ENCODE measurements at regions of chr18 and their contacts with region 1.

Region 1: GRCh38 chr18:77000527-77000926 is 132.1 kb downstream of the MBP start:
- DNase-seq: no peak
- H3K4me3 ChIP-seq: peak overlapping the region in 3 of 4 donors; percentile 9 to 38 (median 29)
- H3K27ac ChIP-seq: no peak overlapping the region
- H3K4me1 ChIP-seq: peaks cover 0 to 8% (median 6%) of the 10 kb centered on the region in 4 donors
- H3K27me3 ChIP-seq: no peaks in the 10 kb centered on the region
- CTCF ChIP-seq: peak; percentile 94 to 97 (median 95)
- EP300 ChIP-seq: no peak
- POLR2A ChIP-seq: no peak

Region 2: DNA sequence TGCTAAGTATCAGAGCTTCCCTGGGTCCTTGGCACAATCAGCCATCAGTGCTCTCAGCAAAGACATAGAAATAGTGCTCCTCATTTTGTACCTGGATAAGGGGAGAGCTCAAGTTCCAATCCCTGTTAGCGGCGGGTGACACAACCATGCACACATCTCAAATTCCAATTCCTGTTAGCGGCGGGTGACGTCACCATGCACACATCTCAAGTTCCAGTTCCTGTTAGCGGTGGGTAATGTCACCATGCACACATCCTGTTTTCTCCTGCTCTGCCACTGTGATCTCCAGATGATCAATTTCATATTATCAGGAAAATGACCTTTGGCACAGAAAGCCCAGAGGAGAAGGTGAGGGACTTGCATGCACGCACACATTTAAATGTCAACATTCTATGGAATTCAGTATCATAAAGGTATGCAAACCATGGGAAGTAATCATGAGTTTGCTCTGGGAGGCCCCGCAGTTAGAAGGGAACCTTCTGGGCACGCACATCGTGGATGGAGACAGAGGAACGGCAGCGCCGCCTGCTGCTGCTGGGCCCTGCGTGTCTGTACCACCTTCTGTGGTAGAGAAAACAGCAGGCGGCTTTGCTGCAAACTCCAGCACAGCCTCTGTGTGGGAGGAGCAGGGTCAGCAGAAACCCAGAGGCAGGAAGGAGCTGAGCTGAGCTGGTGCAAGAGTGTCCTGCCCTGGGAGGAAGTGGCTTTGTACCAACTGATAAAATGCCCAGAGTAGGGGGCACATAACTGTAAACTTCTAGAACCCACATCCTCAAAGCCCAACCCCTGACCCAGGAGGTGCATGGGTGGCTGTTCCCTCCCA is 54.3 kb after region 1 on chr18:
- intact Hi-C with region 1: loop called (anchors 10 kb)
- DNase-seq: no peak
- H3K4me3 ChIP-seq: no peak overlapping the region
- H3K27ac ChIP-seq: peak overlapping the region; percentile 55 to 73 (median 70)
- H3K4me1 ChIP-seq: peaks cover 38 to 73% (median 53%) of the 10 kb centered on the region in 4 donors
- H3K27me3 ChIP-seq: no peaks in the 10 kb centered on the region
- CTCF ChIP-seq: peak; percentile 24 to 46 (median 40)
- EP300 ChIP-seq: no peak
- POLR2A ChIP-seq: no peak

Region 3: DNA sequence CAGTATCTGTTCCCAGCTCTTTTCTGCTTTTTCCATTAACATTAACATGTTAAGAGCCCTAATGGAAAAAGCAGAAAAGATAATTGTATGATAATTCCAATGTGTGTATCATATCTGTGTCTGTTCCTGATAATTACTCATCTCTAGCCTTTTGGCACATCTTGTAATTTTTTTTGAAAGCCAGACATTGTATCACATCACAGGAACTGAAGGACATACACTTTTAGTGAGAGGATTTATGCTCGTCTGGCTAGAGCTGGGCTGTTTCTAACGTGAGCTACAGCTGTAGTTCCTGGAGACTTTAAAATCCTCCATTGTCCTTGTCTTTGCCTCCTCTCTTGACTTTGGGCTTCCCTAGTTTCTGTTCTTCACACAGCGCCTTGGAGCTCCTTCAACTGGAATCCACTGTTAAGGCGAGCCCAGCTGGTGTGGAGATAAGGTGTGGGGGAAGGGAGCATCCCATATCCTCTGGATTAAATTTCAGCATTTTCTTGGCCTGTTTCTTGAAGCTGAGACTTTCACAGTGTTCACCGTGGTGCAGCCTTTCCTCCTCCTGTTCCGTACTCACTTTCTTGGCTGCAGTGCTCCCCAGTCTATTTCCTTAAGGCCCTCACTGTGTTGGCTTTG is 460.6 kb after region 1 on chr18:
- intact Hi-C with region 1: no loop called
- DNase-seq: no peak
- H3K4me3 ChIP-seq: no peak overlapping the region
- H3K27ac ChIP-seq: no peak overlapping the region
- H3K4me1 ChIP-seq: peaks cover 0 to 14% (median 3%) of the 10 kb centered on the region in 4 donors
- H3K27me3 ChIP-seq: no peaks in the 10 kb centered on the region
- CTCF ChIP-seq: no peak
- EP300 ChIP-seq: no peak
- POLR2A ChIP-seq: no peak

Region 4: DNA sequence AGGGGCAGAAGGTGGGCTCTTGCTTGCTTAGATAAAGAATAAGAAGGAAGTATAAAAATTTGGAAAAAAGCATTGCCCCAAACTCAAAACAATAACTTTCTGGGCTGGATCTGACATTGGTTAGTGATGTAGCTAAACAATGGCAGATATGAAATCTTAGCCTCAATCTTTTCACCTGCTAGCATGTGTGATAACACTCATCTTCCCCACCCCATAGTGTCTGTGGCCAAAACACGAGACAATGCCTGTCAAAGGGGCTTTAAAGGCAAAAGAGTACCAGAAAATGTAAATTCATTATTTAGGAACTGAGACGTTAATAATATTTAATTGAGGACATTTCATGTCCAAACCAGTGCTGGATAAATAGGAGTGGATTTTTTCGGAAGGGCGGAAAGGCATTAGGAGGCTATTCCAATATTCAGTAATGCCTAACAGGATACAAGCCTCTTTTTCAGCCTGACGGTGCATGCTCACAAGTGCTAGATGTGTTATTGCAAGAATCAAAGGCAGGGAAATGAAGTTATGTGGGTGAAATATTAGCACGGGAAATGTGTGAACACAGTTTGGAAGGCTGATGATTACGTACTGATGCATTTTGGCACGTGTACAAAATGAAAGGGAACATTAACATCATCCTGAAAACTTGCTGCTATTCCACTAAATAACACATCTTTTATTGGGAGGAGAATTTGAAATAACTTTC is 644.8 kb after region 1 on chr18:
- intact Hi-C with region 1: loop called (anchors 5 kb)
- DNase-seq: peak; percentile 70
- H3K4me3 ChIP-seq: no peak overlapping the region
- H3K27ac ChIP-seq: no peak overlapping the region
- H3K4me1 ChIP-seq: no peaks in the 10 kb centered on the region
- H3K27me3 ChIP-seq: no peaks in the 10 kb centered on the region
- CTCF ChIP-seq: no peak
- EP300 ChIP-seq: no peak
- POLR2A ChIP-seq: no peak

Measured in esophagus muscularis mucosa (tissue), 4 donors.